CD4-positive, alpha-beta T cell (primary cell): ENCODE measurements at regions of chr4 and their contacts with region 1.

Region 1: DNA sequence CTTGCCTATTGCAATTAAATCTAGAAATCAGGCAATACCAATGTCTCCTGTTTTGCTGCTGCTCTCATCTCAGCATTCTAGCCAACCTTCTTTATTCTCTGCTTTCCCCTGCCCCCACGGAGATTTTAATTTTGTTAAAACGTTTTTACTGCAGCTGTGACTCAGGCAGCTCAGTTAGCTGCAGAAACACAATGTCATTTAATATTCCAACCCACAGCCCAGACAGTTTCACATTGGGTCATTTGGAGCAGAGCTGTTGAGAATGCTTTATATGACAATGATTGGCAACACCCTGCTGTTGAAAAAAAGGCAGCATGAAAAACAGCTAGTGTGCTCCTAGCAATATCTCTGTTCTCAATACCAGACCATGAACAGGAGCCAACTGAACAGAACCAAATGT is 12.6 kb upstream of the SLC10A4 start:
- DNase-seq: no peak
- ATAC-seq: no peak
- H3K4me3 ChIP-seq: no peak overlapping the region
- H3K4me3 Mint-ChIP-seq: no peak overlapping the region
- H3K27ac ChIP-seq: no peak overlapping the region
- H3K27ac Mint-ChIP-seq: no peak overlapping the region
- H3K4me1 ChIP-seq: no peaks in the 10 kb centered on the region
- H3K4me1 Mint-ChIP-seq: no peaks in the 10 kb centered on the region
- H3K27me3 ChIP-seq: no peaks in the 10 kb centered on the region
- H3K27me3 Mint-ChIP-seq: peaks cover 7% of the 10 kb centered on the region
- CTCF ChIP-seq: no peak

Region 2: GRCh38 chr4:47334652-47335051 is 1135.9 kb before region 1 on chr4:
- CTCF ChIA-PET with region 1: no interaction called
- POLR2A ChIA-PET with region 1: no interaction called
- intact Hi-C with region 1: loop called in 1 of 2 experiments (anchors 5 kb)
- DNase-seq: no peak
- ATAC-seq: no peak
- H3K4me3 ChIP-seq: no peak overlapping the region
- H3K4me3 Mint-ChIP-seq: no peak overlapping the region
- H3K27ac ChIP-seq: no peak overlapping the region
- H3K27ac Mint-ChIP-seq: no peak overlapping the region
- H3K4me1 ChIP-seq: no peaks in the 10 kb centered on the region
- H3K4me1 Mint-ChIP-seq: no peaks in the 10 kb centered on the region
- H3K27me3 ChIP-seq: peaks cover 3% of the 10 kb centered on the region in 2 experiments
- H3K27me3 Mint-ChIP-seq: peaks cover 36% of the 10 kb centered on the region
- CTCF ChIP-seq: no peak